ENCODE measurements at regions of chr1 and their contacts with region 1.

Region 1: GRCh38 chr1:45339789-45340570 is at the starts of genes MUTYH and TOE1:
- DNase-seq: peak; percentile 96
- CTCF ChIP-seq: no peak

Region 2: DNA sequence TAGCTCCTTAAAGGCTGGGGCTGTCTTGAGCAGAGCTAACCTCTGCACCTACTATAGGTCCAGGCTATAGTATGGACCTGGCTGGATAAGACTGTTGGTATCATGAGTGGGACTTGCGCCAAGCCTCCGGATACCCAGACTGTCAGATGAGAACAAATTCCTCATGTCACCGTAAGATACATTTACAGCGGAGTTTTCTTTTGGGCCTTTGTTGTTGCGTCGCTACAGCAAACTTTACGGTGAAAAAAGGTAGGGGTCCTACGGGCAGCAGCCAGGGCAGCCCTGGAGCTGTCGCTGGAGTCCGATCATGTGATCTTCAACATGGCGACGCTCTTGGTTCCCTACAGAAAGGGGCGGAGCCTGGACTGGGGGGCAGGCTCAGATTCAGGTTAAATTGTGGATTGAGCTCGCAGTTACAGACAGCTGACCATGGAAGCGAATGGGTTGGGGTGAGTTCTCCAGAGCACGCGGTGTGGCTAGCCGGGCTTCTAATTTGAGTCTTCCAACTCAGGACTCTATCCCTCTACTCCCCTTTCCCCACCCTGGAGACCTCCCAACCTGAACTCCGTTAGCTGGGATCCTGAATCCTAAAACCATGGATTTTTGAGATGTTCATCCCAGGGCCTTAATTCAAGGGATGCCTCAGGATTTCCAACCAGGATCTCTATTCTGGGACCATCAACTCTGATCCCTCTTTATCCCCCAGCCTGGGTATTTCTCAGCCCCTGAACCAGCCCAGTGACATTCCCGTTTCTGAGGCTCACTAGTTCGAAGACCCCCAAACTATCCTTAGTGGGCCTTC is 327.9 kb before region 1 on chr1 and contains the start of gene UROD:
- CTCF ChIA-PET with region 1: interaction called, 21 read pairs
- POLR2A ChIA-PET with region 1: no interaction called
- DNase-seq: peak; percentile 95
- CTCF ChIP-seq: no peak

Region 3: GRCh38 chr1:45326627-45327623 is 13.1 kb before region 1 on chr1 and contains the start of gene HPDL:
- CTCF ChIA-PET with region 1: interaction called, 32 read pairs
- POLR2A ChIA-PET with region 1: interaction called, 11 read pairs
- DNase-seq: peak; percentile 83
- CTCF ChIP-seq: no peak

Region 4: DNA sequence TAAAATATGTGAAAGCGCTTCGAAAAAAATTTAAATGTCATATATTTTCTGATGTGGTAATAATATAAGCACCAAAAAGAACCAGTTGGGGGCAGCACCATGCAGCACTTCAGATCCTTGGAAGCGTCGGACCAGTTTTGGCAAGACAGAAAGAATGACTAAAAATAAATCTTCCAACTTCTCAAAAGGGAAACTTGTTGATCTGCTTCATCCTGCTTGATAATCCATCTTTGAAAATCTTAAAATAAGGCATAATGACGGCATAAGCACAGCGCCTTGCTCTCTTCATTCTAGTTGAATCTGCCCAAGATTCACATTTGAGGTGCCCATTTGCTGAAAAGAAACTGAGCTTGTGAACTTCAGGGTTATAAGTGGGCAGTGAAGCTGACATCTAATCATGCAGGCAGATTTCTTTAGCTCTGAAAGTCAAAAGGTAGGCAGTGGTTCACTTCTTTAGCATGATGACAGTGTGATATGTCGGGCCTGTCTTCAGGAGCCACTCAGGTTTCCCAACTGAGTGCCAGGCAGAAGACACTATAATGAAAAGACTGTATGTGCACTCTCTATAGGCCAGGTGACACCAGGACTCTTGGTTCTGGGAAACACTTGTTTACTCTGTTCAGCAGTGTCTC is 20.0 kb after region 1 on chr1:
- CTCF ChIA-PET with region 1: interaction called, 131 read pairs
- POLR2A ChIA-PET with region 1: interaction called, 3 read pairs
- DNase-seq: no peak
- CTCF ChIP-seq: peak; percentile 58

Region 5: DNA sequence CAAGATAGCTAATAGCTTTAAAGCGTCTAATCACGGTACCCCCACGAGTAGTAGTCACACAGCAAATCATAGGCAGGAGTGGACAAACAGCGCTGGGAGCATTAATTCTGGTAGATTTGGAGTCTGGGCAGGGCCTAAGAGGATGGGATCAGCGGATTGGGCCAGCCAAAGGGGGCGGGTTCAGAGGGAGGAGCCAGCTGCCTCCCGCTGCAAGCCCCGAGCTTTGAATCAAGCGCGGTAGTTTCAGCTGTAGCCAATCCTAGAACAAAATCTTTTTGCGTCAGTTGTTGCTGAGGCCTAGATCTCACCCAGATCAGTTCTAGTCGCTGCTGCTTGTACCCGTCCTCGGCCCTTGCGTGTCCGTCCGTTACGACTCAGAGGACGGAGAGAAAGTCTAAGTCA is 243.3 kb after region 1 on chr1:
- CTCF ChIA-PET with region 1: no interaction called
- POLR2A ChIA-PET with region 1: interaction called, 10 read pairs
- DNase-seq: peak; percentile 98
- CTCF ChIP-seq: no peak

Measured in GM10248 (cell line).